Astrocyte of the cerebellum (primary cell): ENCODE measurements at regions of chr14 and their contacts with region 1.

Region 1: DNA sequence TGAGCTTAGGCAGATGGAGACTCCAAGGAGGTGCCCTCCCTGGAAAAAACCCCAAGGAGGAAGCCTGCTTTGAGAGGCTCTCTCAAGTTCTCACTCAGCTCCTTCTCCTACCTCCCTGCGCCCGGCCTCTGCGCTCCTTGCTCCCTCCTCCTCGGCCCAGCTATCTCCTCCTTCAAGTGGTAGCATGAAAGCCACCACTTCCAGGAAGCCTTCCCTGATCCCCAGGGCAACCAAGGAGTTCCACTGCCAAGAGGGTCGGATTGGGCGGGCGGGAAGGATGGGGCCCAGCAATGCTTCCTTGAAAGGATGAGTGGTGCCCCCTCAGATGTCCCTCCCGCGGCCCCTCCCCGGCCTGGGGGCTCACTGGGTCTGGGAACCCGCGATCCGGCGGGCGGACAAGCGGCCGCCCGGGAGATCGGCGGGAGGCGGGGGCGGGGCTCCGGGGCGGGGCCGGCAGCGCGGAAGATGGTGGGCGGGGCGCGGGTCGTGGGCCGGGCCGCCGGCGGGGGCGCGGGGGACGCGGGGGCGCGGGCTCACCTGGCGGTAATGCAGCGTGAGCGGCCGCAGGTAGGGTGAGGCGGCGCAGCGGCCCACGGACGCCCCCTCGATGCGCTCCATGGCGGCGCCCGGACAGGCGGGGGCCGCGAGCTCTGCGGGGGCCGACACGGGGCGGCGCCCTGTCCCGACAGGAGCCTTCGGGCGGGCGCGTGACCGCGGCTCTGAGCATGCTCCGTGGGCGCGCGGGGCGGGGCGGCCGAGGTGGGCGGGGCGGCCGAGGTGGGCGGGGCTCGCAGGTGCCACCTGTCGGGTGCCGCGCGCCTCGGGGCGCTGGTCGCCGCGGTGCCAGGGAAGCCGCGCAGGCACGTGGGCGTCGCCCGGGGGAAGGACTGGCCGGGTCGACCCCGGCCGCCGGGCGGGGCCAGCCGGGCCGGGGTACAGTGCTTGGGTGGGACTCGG is at the start of gene NUDT14:
- DNase-seq: no peak
- H3K4me3 ChIP-seq: peak within 1 kb of the TSS; percentile 40
- CTCF ChIP-seq: no peak

Region 2: DNA sequence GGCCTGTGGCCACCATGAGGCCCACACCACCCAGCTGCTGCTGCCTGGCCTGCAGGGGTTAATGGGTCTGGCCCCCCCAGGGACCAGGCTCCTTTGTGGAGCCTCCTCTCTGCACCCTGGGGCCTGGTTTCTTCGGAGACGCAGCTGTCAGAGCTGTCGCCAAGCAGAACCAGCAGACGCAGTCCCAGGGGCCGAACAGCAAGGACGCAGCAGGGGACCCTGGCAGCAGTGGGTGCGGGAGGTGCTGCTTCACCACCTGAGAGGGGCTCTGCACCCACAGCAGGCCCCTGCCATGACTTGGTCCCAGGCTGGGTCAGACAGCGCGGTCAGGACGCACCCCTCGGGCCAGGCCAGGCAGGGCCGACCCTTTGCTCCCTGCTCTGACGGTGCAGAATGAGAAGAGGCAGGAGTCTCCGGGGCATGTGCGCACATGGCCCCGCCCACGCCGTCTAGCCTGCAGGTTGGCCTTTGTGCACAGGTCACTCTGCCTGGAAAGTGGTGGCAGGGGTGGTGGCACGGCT is 42.8 kb before region 1 on chr14:
- in situ Hi-C with region 1: no loop called
- DNase-seq: no peak
- H3K4me3 ChIP-seq: no peak overlapping the region
- CTCF ChIP-seq: no peak

Region 3: GRCh38 chr14:105281371-105282097 is 100.7 kb after region 1 on chr14:
- in situ Hi-C with region 1: loop called (anchors 25 kb)
- DNase-seq: peak; percentile 60
- H3K4me3 ChIP-seq: no peak overlapping the region
- CTCF ChIP-seq: peak; percentile 84

Region 4: GRCh38 chr14:105363847-105364708 is 183.2 kb after region 1 on chr14:
- in situ Hi-C with region 1: no loop called
- DNase-seq: no peak
- H3K4me3 ChIP-seq: peak overlapping the region; percentile 3
- CTCF ChIP-seq: no peak